HEK293T (cell line): ENCODE measurements at regions of chr18 and their contacts with region 1.

Region 1: GRCh38 chr18:26685438-26686157 is 137.2 kb upstream of the KCTD1 start:
- DNase-seq: no peak

Region 2: GRCh38 chr18:26548429-26549262 is 137.0 kb before region 1 on chr18 and contains the start of gene KCTD1:
- CTCF ChIA-PET with region 1: no interaction called
- POLR2A ChIA-PET with region 1: no interaction called
- DNase-seq: peak; percentile 90

Region 3: GRCh38 chr18:26757263-26758019 is 71.8 kb after region 1 on chr18:
- CTCF ChIA-PET with region 1: no interaction called
- POLR2A ChIA-PET with region 1: no interaction called
- DNase-seq: no peak

Region 4: GRCh38 chr18:26971409-26971808 is 285.8 kb after region 1 on chr18:
- CTCF ChIA-PET with region 1: interaction called, 11 read pairs
- POLR2A ChIA-PET with region 1: no interaction called
- DNase-seq: no peak